Activated CD4-positive, alpha-beta memory T cell treated with anti-CD3 and anti-CD28 coated beads for 36 hours (primary cell): ENCODE measurements at regions of chr9 and their contacts with region 1.

Region 1: GRCh38 chr9:111896353-111896958 is at the start of gene UGCG:
- DNase-seq: peak; percentile 91
- H3K4me3 Mint-ChIP-seq: peak within 1 kb of the TSS; percentile 88
- H3K27ac Mint-ChIP-seq: peak within 1 kb of the TSS; percentile 83
- H3K4me1 Mint-ChIP-seq: peaks cover 23% of the 10 kb centered on the region
- H3K27me3 Mint-ChIP-seq: no peaks in the 10 kb centered on the region
- total RNA-seq, gene UGCG: 12.4 to 13.5 TPM

Region 2: DNA sequence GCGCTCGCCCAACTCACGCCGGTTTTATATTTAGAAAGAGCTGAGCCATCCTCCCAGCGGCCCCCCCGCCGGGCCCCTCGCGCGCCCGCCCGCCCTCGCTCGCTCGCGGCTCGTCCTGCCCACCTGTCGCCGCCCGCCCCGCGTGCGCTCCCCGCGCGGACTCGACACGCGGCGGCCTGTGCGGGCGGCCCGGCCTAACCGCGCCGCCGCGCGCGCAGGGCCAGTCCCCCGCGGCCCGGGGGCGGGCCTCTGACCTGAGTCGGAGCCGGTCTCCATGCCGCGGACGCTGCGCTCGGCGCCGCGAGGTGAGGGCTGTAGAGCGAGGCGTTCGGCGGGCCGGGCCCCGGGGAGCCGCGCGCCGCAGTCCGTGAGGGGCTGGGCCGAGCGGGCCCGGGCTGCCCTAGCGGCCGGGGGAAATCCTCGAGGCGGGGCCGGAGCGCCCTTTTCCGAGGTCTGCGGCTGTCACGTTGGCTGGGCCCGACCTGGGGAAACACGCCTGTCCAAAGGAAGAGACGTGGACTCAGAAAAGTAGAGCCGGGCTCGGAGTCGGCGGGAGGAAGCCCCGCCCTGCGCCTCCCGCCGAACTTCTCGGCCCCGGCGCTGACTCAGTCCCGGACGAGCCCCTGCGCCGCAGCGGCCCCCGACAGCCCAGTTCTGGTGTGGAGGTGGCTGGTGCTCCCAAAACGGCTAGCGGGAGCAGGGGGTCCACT is 412.4 kb before region 1 on chr9 and contains the start of gene ECPAS:
- CTCF ChIA-PET with region 1: no interaction called
- POLR2A ChIA-PET with region 1: no interaction called
- intact Hi-C with region 1: loop called (anchors 5 kb)
- DNase-seq: peak; percentile 80
- H3K4me3 Mint-ChIP-seq: peak within 1 kb of the TSS; percentile 85
- H3K27ac Mint-ChIP-seq: peak within 1 kb of the TSS; percentile 87
- H3K4me1 Mint-ChIP-seq: peaks cover 30% of the 10 kb centered on the region
- H3K27me3 Mint-ChIP-seq: no peaks in the 10 kb centered on the region
- total RNA-seq, gene ECPAS: 66.5 to 67.0 TPM

Region 3: GRCh38 chr9:111631071-111631971 is 265.1 kb before region 1 on chr9 and contains the start of gene DNAJC25:
- CTCF ChIA-PET with region 1: no interaction called
- POLR2A ChIA-PET with region 1: no interaction called
- intact Hi-C with region 1: loop called (anchors 5 kb)
- DNase-seq: peak; percentile 98
- H3K4me3 Mint-ChIP-seq: peak within 1 kb of the TSS; percentile 90
- H3K27ac Mint-ChIP-seq: peak within 1 kb of the TSS; percentile 74
- H3K4me1 Mint-ChIP-seq: peaks cover 43% of the 10 kb centered on the region
- H3K27me3 Mint-ChIP-seq: no peaks in the 10 kb centered on the region
- total RNA-seq, gene DNAJC25: 4.2 to 4.5 TPM

Region 4: GRCh38 chr9:111683392-111683791 is 213.1 kb before region 1 on chr9:
- CTCF ChIA-PET with region 1: no interaction called
- POLR2A ChIA-PET with region 1: no interaction called
- intact Hi-C with region 1: no loop called
- DNase-seq: no peak
- H3K4me3 Mint-ChIP-seq: no peak overlapping the region
- H3K27ac Mint-ChIP-seq: no peak overlapping the region
- H3K4me1 Mint-ChIP-seq: no peaks in the 10 kb centered on the region
- H3K27me3 Mint-ChIP-seq: no peaks in the 10 kb centered on the region

Region 5: DNA sequence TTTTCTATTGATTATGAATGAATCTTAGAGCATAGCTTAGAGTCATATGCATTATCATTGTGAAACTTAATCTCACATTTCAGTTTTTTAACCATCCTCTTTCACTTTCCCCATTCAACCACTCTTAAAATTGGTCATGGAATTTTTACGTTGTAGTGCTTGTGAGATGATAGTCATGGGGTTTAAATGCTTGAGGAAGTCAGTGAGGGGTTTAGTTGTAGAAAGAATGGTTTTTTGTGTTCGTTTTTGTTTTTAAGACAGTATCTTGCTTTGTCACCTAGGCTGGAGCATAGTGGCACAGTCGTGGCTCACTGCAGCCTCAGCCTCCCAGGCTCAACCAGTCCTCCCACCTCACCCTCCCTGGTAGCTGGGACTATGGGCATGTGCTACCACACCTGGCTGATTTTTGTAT is 19.8 kb after region 1 on chr9:
- CTCF ChIA-PET with region 1: interaction called, 4 read pairs
- POLR2A ChIA-PET with region 1: interaction called, 22 read pairs
- intact Hi-C with region 1: loop called (anchors 1 kb)
- DNase-seq: peak; percentile 53
- H3K4me3 Mint-ChIP-seq: peak overlapping the region; percentile 8
- H3K27ac Mint-ChIP-seq: peak overlapping the region; percentile 77
- H3K4me1 Mint-ChIP-seq: peaks cover 54% of the 10 kb centered on the region
- H3K27me3 Mint-ChIP-seq: no peaks in the 10 kb centered on the region

Region 6: DNA sequence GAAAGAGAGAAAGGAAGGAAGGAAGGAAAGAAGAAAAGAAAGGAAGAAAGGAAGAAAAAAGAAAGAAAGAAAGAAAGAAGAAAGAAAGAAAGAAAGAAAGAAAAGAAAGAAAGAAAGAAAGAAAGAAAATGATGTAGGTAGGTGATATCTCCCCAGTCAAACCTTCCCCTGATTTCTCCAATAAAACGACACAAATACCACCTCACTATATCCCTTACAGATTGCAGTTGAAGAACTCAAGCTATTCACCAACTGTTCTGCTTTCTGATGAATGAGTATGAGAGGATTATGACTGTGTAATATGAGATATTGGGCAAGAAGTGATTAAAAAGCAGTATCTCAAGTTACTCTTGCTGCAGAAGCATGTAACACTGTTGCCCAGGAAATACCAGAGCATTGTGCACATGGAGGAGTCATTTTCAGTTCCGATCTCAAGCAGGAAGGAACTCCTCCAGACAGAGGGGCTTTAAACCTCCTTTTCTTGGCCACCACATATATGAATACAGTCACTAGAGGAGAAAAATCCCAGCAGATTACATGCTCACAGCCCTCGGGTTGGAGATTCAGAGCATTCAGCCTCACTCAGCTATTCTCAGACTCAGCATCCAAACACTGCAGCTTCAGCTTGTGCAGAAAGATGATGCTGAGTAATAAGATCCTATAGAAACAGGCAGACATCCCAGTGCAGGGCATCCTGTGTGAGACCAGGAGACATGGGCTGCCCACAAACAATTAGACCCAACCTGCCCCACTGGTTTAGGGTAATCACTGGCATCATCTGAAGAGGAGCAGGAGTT is 61.6 kb after region 1 on chr9:
- CTCF ChIA-PET with region 1: interaction called, 3 read pairs
- POLR2A ChIA-PET with region 1: interaction called, 3 read pairs
- intact Hi-C with region 1: loop called (anchors 5 kb)
- DNase-seq: no peak
- H3K4me3 Mint-ChIP-seq: no peak overlapping the region
- H3K27ac Mint-ChIP-seq: no peak overlapping the region
- H3K4me1 Mint-ChIP-seq: peaks cover 14% of the 10 kb centered on the region
- H3K27me3 Mint-ChIP-seq: peaks cover 6% of the 10 kb centered on the region

Region 7: GRCh38 chr9:112037281-112038016 is 141.0 kb after region 1 on chr9:
- CTCF ChIA-PET with region 1: no interaction called
- POLR2A ChIA-PET with region 1: no interaction called
- intact Hi-C with region 1: loop called (anchors 1 kb)
- DNase-seq: peak; percentile 86
- H3K4me3 Mint-ChIP-seq: peak overlapping the region; percentile 37
- H3K27ac Mint-ChIP-seq: peak overlapping the region; percentile 81
- H3K4me1 Mint-ChIP-seq: peaks cover 49% of the 10 kb centered on the region
- H3K27me3 Mint-ChIP-seq: peaks cover 18% of the 10 kb centered on the region

Region 8: DNA sequence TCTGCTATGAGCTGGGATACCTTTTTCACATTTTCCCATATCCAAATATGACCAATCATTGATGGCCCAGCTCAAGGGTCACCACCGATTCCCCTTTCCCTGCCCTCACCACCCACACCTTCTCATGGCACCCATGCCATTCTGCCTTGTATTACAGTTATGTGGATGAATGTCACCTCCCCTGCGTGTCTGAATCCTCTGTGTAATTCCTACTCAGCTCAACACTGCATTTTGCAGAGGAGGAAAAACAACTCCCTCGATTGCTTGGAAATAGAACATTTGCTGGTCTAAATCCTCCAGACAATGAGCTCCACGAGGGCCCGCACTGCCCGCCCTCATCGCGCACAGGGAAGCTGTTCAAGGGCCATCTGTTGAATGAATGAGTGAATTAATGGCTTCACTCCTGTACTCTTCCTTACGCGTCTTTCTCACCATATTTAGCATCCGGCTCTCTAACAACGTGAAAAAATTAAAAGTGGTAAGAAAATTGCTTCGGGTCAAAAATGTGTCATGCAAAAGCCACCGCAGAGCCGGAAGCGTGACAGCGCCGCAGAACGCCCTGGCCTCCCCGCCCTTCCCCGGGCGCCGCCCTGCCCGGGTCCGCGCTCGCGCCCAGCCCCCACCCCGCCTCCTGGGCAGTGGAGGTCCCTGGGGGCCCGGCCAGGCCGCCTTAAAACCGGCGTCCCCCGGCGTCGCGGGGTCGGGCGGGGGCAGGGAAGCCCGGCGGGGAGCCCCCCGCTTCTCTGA is 277.9 kb after region 1 on chr9:
- CTCF ChIA-PET with region 1: no interaction called
- POLR2A ChIA-PET with region 1: no interaction called
- intact Hi-C with region 1: loop called (anchors 5 kb)
- DNase-seq: peak; percentile 88
- H3K4me3 Mint-ChIP-seq: peak overlapping the region; percentile 80
- H3K27ac Mint-ChIP-seq: peak overlapping the region; percentile 84
- H3K4me1 Mint-ChIP-seq: peaks cover 40% of the 10 kb centered on the region
- H3K27me3 Mint-ChIP-seq: peaks cover 8% of the 10 kb centered on the region